A673 (cell line): ENCODE measurements at regions of chr1 and their contacts with region 1.

Region 1: GRCh38 chr1:13748610-13749505 is 48.9 kb downstream of the PRDM2 start:
- DNase-seq: peak; percentile 98
- H3K4me3 ChIP-seq: peak overlapping the region; percentile 90
- H3K27ac ChIP-seq: peak overlapping the region; percentile 83
- H3K4me1 ChIP-seq: peaks cover 18% of the 10 kb centered on the region
- H3K27me3 ChIP-seq: no peaks in the 10 kb centered on the region
- CTCF ChIP-seq: peak; percentile 36; the same call in 1 of the 2 replicates

Region 2: GRCh38 chr1:13714851-13715250 is 34.0 kb before region 1 on chr1:
- CTCF ChIA-PET with region 1: no interaction called
- POLR2A ChIA-PET with region 1: no interaction called
- intact Hi-C with region 1: loop called (anchors 5 kb)
- DNase-seq: no peak
- H3K4me3 ChIP-seq: no peak overlapping the region
- H3K27ac ChIP-seq: no peak overlapping the region
- H3K4me1 ChIP-seq: peaks cover 5% of the 10 kb centered on the region
- H3K27me3 ChIP-seq: no peaks in the 10 kb centered on the region
- CTCF ChIP-seq: peak; percentile 50

Region 3: GRCh38 chr1:13759088-13759487 is 10.2 kb after region 1 on chr1:
- CTCF ChIA-PET with region 1: interaction called, 12 read pairs
- POLR2A ChIA-PET with region 1: no interaction called
- intact Hi-C with region 1: no loop called
- DNase-seq: no peak
- H3K4me3 ChIP-seq: no peak overlapping the region
- H3K27ac ChIP-seq: no peak overlapping the region
- H3K4me1 ChIP-seq: peaks cover 31% of the 10 kb centered on the region
- H3K27me3 ChIP-seq: no peaks in the 10 kb centered on the region
- CTCF ChIP-seq: no peak